IMR-90 (cell line): ENCODE measurements at regions of chr2 and their contacts with region 1.

Region 1: GRCh38 chr2:124027182-124027581 is 2.1 kb downstream of the CNTNAP5 start:
- DNase-seq: peak; percentile 30
- ATAC-seq: peak; percentile 82
- H3K4me3 ChIP-seq: no peak overlapping the region
- H3K27ac ChIP-seq: no peak overlapping the region
- H3K4me1 ChIP-seq: no peaks in the 10 kb centered on the region
- H3K27me3 ChIP-seq: no peaks in the 10 kb centered on the region
- CTCF ChIP-seq: peak; percentile 60
- POLR2A ChIP-seq: no peak
- RAD21 ChIP-seq: peak; percentile 74

Region 2: DNA sequence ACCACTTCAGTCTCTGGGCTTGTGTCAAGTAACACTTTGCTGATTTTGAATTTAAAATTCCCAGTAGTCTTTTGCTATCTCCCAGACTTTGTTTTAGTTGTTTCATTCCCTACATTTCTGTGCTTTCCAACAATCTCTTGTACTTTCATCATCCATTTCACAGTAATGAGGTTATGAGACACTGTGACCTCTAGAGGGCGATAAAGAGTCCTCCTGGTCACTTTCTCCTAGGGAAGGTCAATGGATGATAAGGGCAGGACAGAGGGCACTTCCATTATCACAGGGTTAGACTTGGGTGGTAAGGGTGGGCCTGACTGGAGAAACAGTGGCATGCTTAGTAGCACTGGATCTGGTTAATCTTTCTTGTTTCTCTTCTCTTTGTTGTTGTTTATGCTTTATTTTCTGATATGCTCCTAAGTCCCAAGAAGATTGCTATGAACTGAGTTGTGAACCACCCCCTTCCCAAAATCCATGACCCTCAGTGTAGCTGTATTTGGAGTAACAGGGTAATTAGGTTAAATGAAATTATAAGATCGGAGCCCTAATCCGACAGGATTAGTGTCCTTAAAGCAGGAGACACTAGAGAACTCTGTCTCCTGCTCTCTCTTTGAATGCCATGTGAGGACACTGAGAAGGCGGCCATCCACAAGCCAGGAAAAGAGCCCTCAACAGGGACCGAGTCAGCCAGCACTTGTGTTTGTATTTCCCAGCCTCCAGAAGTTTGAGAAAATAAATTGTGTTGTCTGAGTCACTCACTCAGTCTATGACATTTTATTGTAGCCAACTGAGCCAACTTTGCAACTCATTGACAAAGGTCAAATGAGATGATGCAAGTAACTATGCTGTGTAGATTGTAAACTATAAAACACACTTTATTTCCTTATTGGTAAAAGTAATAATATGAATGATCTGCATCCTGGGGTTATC is 777.1 kb after region 1 on chr2:
- CTCF ChIA-PET with region 1: interaction called, 7 read pairs
- POLR2A ChIA-PET with region 1: no interaction called
- dilution Hi-C with region 1: no loop called
- in situ Hi-C with region 1: loop called (anchors 25 kb)
- intact Hi-C with region 1: no loop called
- DNase-seq: peak; percentile 25
- ATAC-seq: peak; percentile 49; the same call in 1 of the 2 replicates
- H3K4me3 ChIP-seq: no peak overlapping the region
- H3K27ac ChIP-seq: no peak overlapping the region
- H3K4me1 ChIP-seq: no peaks in the 10 kb centered on the region; the same call in 1 of the 2 replicates
- H3K27me3 ChIP-seq: no peaks in the 10 kb centered on the region
- CTCF ChIP-seq: peak; percentile 47
- POLR2A ChIP-seq: no peak
- RAD21 ChIP-seq: peak; percentile 42

Region 3: GRCh38 chr2:124810132-124810531 is 783.0 kb after region 1 on chr2:
- CTCF ChIA-PET with region 1: interaction called, 7 read pairs
- POLR2A ChIA-PET with region 1: no interaction called
- dilution Hi-C with region 1: no loop called
- in situ Hi-C with region 1: loop called (anchors 25 kb)
- intact Hi-C with region 1: loop called (anchors 1 kb)
- DNase-seq: peak; percentile 44
- ATAC-seq: peak; percentile 40
- H3K4me3 ChIP-seq: no peak overlapping the region
- H3K27ac ChIP-seq: no peak overlapping the region
- H3K4me1 ChIP-seq: no peaks in the 10 kb centered on the region
- H3K27me3 ChIP-seq: no peaks in the 10 kb centered on the region
- CTCF ChIP-seq: peak; percentile 34
- POLR2A ChIP-seq: no peak
- RAD21 ChIP-seq: peak; percentile 51

Region 4: DNA sequence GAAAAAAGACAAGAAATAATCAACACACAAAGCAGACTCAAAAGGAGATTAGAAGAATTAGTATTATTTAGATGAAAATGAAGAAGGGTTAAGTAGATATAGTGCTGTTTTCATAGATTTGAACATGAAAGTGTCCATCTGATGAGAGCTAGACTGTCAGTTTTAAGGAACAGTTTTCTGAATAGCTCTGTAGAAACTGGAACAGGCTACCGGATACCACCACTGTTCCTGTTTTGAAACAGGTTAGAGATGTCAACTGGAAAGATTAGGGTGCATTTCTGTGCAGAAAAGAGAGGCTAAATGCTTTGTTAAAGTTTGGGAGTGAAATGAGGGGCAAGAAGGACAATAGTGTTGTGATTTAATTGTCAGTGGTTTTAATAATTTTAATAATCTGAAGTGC is 906.7 kb after region 1 on chr2:
- CTCF ChIA-PET with region 1: no interaction called
- POLR2A ChIA-PET with region 1: no interaction called
- dilution Hi-C with region 1: no loop called
- in situ Hi-C with region 1: no loop called
- intact Hi-C with region 1: no loop called
- DNase-seq: no peak
- ATAC-seq: no peak
- H3K4me3 ChIP-seq: no peak overlapping the region
- H3K27ac ChIP-seq: no peak overlapping the region
- H3K4me1 ChIP-seq: no peaks in the 10 kb centered on the region
- H3K27me3 ChIP-seq: no peaks in the 10 kb centered on the region
- CTCF ChIP-seq: no peak
- POLR2A ChIP-seq: no peak
- RAD21 ChIP-seq: no peak

Region 5: GRCh38 chr2:125471963-125472362 is 1444.8 kb after region 1 on chr2:
- CTCF ChIA-PET with region 1: no interaction called
- POLR2A ChIA-PET with region 1: no interaction called
- dilution Hi-C with region 1: no loop called
- in situ Hi-C with region 1: loop called (anchors 25 kb)
- intact Hi-C with region 1: no loop called
- DNase-seq: peak; percentile 38
- ATAC-seq: peak; percentile 70; the same call in 1 of the 2 replicates
- H3K4me3 ChIP-seq: no peak overlapping the region
- H3K27ac ChIP-seq: no peak overlapping the region
- H3K4me1 ChIP-seq: no peaks in the 10 kb centered on the region
- H3K27me3 ChIP-seq: no peaks in the 10 kb centered on the region
- CTCF ChIP-seq: peak; percentile 76
- POLR2A ChIP-seq: no peak
- RAD21 ChIP-seq: peak; percentile 91